ENCODE measurements at regions of chr12 and their contacts with region 1.

Region 1: DNA sequence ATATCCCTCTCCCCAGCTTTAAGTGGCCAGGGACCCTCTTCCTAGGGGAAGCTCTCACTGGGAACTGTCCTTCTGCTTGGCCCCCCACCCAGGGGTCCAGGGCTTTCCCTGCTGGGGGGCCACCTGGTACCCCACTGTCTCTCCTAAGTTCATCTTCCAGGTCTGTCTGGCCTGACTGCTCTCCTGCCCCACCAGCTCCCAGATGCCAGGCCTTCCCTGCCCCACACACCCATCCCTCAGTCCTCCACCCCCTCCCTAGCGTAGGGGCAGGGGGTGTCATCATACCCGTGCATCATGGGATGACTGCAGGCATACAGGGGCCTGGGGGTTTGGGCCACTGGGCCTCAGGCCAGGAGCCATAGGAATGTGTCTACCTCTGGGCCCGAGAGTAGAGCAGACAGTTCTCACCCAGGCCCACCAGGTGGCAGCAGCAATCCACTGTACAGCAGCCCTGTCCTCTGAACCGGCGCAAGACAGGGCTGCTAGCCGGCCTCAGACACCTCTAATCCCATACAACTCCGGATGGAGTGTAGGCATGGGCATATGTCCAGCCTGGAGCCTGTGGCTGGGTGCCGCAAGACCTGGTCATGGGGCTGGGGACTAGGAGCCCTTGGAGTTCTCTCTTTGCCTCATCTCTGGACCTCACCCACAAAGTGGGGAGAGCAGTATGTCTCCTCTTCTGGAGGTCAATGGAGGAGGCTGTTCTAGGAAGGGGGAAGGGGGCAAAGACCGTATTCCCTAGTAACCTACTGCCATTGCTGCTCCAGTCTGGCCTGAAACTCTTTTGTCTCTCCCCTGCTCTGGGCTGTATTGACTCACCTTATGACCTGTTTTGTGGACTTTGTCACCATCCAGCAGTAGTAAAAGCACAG is 10.0 kb upstream of the SMARCD1 start:
- DNase-seq: no peak
- H3K4me3 ChIP-seq: no peak overlapping the region
- H3K27ac ChIP-seq: no peak overlapping the region
- H3K27me3 ChIP-seq: no peaks in the 10 kb centered on the region
- CTCF ChIP-seq: peak; percentile 91

Region 2: GRCh38 chr12:49866859-49867579 is 208.2 kb before region 1 on chr12:
- CTCF ChIA-PET with region 1: interaction called, 20 read pairs
- POLR2A ChIA-PET with region 1: no interaction called
- DNase-seq: peak; percentile 15
- H3K4me3 ChIP-seq: no peak overlapping the region
- H3K27ac ChIP-seq: no peak overlapping the region
- H3K27me3 ChIP-seq: peaks cover 23% of the 10 kb centered on the region
- CTCF ChIP-seq: peak; percentile 98

Region 3: GRCh38 chr12:49959570-49960465 is 115.4 kb before region 1 on chr12:
- CTCF ChIA-PET with region 1: interaction called, 290 read pairs
- POLR2A ChIA-PET with region 1: no interaction called
- DNase-seq: no peak
- H3K4me3 ChIP-seq: no peak overlapping the region
- H3K27ac ChIP-seq: no peak overlapping the region
- H3K27me3 ChIP-seq: peaks cover 87% of the 10 kb centered on the region
- CTCF ChIP-seq: no peak

Region 4: GRCh38 chr12:49983892-49984291 is 91.3 kb before region 1 on chr12:
- CTCF ChIA-PET with region 1: interaction called, 14 read pairs
- POLR2A ChIA-PET with region 1: interaction called, 7 read pairs
- DNase-seq: peak; percentile 67
- H3K4me3 ChIP-seq: no peak overlapping the region; the same call in 1 of the 2 replicates
- H3K27ac ChIP-seq: peak overlapping the region; percentile 47
- H3K27me3 ChIP-seq: no peaks in the 10 kb centered on the region
- CTCF ChIP-seq: 0 out of 2 replicates have a peak, but pooled peaks have one; percentile 6

Region 5: DNA sequence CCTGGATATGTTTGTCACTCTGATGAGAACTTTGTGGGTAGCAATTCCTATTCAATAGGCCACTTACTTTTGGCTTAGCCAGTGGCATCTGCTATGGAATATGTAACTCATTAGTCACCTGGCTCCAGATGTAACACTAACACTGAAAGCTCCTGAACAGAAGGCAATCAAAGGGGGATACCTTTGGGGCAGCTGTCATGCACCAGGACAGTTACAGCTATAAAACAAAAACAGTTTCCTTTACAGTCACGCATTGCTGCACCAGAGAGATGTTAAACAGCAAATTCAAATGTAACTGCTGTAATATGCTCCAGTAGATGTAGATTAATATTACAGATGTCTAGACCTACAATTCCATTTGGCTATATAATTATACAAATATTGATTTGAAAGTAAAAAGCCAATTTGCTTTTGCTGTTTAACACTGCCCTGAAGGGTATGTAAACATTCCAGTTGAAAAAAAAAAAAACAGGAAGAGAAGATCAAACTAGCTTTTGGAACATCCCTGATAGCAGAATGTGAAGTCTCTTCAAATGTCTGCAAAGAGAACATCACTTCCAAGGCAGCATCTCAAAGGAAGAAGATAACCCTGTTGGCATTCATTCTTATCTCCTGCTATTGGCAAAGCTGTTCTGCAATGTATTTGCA is 68.3 kb before region 1 on chr12:
- CTCF ChIA-PET with region 1: interaction called, 11 read pairs
- POLR2A ChIA-PET with region 1: no interaction called
- DNase-seq: no peak
- H3K4me3 ChIP-seq: no peak overlapping the region
- H3K27ac ChIP-seq: no peak overlapping the region
- H3K27me3 ChIP-seq: no peaks in the 10 kb centered on the region
- CTCF ChIP-seq: no peak

Region 6: DNA sequence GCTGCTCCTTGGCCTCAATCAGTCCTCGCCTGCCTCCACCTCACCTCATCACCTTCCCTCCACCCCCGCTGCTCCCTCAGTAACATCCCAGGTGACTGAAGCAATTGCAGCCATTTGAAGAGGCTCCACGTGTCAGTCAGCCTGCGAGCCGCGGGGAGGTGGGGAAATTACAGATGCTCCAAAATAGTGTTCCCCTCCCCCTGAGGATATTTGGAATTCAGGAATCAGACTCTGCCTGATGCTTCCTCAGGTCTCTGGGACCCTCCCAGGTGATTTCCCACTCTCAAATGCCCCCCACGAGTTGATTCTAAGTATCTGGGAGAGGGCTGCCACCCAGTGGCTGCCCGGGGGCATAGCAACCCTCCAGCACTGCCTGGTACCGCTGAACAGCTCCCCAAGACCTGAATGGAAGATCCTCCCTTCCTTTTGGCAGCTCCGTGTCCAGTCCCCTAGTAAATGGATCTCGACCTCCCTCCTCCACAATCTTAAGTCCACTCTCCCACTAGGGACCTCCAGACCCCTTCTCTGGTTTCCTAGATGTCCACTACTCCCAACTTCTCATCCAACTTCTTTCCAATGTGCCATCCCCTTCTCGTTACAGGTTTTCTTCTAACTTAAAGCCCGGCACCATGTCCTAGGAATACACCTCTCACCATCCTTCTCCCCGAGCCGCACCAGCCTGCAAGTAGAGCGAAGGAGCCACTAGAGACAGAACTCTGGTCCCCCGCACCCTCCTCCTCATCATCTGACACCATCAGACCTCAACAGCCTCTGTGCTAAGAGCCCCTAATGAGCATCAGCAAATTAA is 19.1 kb before region 1 on chr12:
- CTCF ChIA-PET with region 1: interaction called, 30 read pairs
- POLR2A ChIA-PET with region 1: no interaction called
- DNase-seq: no peak
- H3K4me3 ChIP-seq: no peak overlapping the region
- H3K27ac ChIP-seq: no peak overlapping the region
- H3K27me3 ChIP-seq: peaks cover 32% of the 10 kb centered on the region
- CTCF ChIP-seq: peak; percentile 99